Right cardiac atrium (tissue), 5 donors: ENCODE measurements at regions of chr10 and their contacts with region 1.

Region 1: GRCh38 chr10:100009793-100010676 is at the start of gene DNMBP:
- DNase-seq: peak; percentile 91 to 95 (median 95)
- ATAC-seq: peak; percentile 95 to 96
- H3K4me3 ChIP-seq: peak within 1 kb of the TSS; percentile 95
- H3K27ac ChIP-seq: peak within 1 kb of the TSS; percentile 92
- H3K4me1 ChIP-seq: peaks cover 9% of the 10 kb centered on the region
- H3K27me3 ChIP-seq: no peaks in the 10 kb centered on the region
- total RNA-seq, gene DNMBP: 7.6 to 10.0 (median 8.0) TPM

Region 2: GRCh38 chr10:99845837-99846382 is 164.1 kb before region 1 on chr10:
- intact Hi-C with region 1: loop called in 1 of 4 experiments (anchors 10 kb)
- DNase-seq: peak; percentile 67 to 81 (median 68)
- ATAC-seq: peak; percentile 91 to 95
- H3K4me3 ChIP-seq: peak overlapping the region; percentile 31
- H3K27ac ChIP-seq: no peak overlapping the region
- H3K4me1 ChIP-seq: no peaks in the 10 kb centered on the region
- H3K27me3 ChIP-seq: no peaks in the 10 kb centered on the region

Region 3: GRCh38 chr10:99906470-99906869 is 103.6 kb before region 1 on chr10:
- intact Hi-C with region 1: loop called in 3 of 4 experiments (anchors 10 kb)
- DNase-seq: peak in 2 of 3 donors; percentile 33 to 48
- ATAC-seq: peak in 1 of 2 donors; percentile 45
- H3K4me3 ChIP-seq: no peak overlapping the region
- H3K27ac ChIP-seq: no peak overlapping the region
- H3K4me1 ChIP-seq: peaks cover 2% of the 10 kb centered on the region
- H3K27me3 ChIP-seq: no peaks in the 10 kb centered on the region

Region 4: GRCh38 chr10:99917963-99918825 is 91.8 kb before region 1 on chr10:
- intact Hi-C with region 1: loop called in 2 of 4 experiments (anchors 10 kb)
- DNase-seq: peak; percentile 22 to 73 (median 58)
- ATAC-seq: peak; percentile 73 to 76
- H3K4me3 ChIP-seq: peak overlapping the region; percentile 34
- H3K27ac ChIP-seq: peak overlapping the region; percentile 68
- H3K4me1 ChIP-seq: peaks cover 4% of the 10 kb centered on the region
- H3K27me3 ChIP-seq: no peaks in the 10 kb centered on the region

Region 5: GRCh38 chr10:99966306-99966705 is 43.7 kb before region 1 on chr10:
- intact Hi-C with region 1: loop called in 2 of 4 experiments (anchors 5 kb)
- DNase-seq: no peak
- ATAC-seq: peak in 1 of 2 donors; percentile 76
- H3K4me3 ChIP-seq: no peak overlapping the region
- H3K27ac ChIP-seq: peak overlapping the region; percentile 57
- H3K4me1 ChIP-seq: peaks cover 7% of the 10 kb centered on the region
- H3K27me3 ChIP-seq: no peaks in the 10 kb centered on the region

Region 6: GRCh38 chr10:99973190-99973589 is 36.8 kb before region 1 on chr10:
- intact Hi-C with region 1: loop called in 2 of 4 experiments (anchors 5 kb)
- DNase-seq: no peak
- ATAC-seq: no peak
- H3K4me3 ChIP-seq: no peak overlapping the region
- H3K27ac ChIP-seq: no peak overlapping the region
- H3K4me1 ChIP-seq: peaks cover 2% of the 10 kb centered on the region
- H3K27me3 ChIP-seq: no peaks in the 10 kb centered on the region